ENCODE measurements at regions of chr9 and their contacts with region 1.

Region 1: GRCh38 chr9:77149879-77150278 is 27.5 kb upstream of the VPS13A start:
- DNase-seq: no peak
- H3K4me3 ChIP-seq: no peak overlapping the region
- H3K27ac ChIP-seq: no peak overlapping the region
- H3K4me1 ChIP-seq: no peaks in the 10 kb centered on the region
- H3K27me3 ChIP-seq: peaks cover 23% of the 10 kb centered on the region
- CTCF ChIP-seq: no peak
- EP300 ChIP-seq: no peak
- RAD21 ChIP-seq: no peak

Region 2: DNA sequence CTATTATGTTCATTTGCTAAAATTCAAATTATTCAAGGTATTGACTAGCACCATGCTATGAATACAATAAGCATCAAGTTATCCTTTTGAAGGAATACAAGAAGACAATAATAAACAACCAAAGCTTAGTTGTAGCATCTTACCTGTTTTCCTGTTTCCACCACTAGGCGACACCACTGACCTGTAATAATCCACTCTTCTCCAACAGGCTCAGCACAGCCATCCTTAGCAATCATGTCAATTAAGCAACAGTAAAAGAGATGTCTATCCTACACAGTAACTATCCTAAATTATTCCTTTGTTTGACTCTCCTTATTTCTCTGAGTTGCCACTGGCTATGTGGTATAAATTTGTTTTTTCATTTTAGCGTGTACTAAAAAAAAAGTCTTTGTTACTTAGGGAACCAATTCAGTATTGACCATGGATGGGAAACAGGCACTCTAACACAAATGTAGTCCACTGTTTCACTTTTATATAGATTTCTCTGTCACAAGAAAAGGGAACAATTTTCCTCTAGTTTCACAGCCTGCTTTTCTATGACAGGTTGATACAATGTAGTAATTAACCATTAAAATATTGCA is 339.4 kb before region 1 on chr9:
- CTCF ChIA-PET with region 1: interaction called, 32 read pairs
- POLR2A ChIA-PET with region 1: no interaction called
- DNase-seq: peak; percentile 37
- H3K4me3 ChIP-seq: no peak overlapping the region; a peak in 1 of 4 replicates
- H3K27ac ChIP-seq: no peak overlapping the region
- H3K4me1 ChIP-seq: no peaks in the 10 kb centered on the region
- H3K27me3 ChIP-seq: peaks cover 23% of the 10 kb centered on the region; the same call in 1 of the 2 replicates
- CTCF ChIP-seq: peak; percentile 94
- EP300 ChIP-seq: no peak
- RAD21 ChIP-seq: peak; percentile 89

Region 3: GRCh38 chr9:77125665-77126064 is 24.2 kb before region 1 on chr9:
- CTCF ChIA-PET with region 1: interaction called, 12 read pairs
- POLR2A ChIA-PET with region 1: no interaction called
- DNase-seq: no peak
- H3K4me3 ChIP-seq: no peak overlapping the region
- H3K27ac ChIP-seq: no peak overlapping the region
- H3K4me1 ChIP-seq: no peaks in the 10 kb centered on the region
- H3K27me3 ChIP-seq: peaks cover 4% of the 10 kb centered on the region; the same call in 1 of the 2 replicates
- CTCF ChIP-seq: no peak
- EP300 ChIP-seq: no peak
- RAD21 ChIP-seq: no peak

Region 4: DNA sequence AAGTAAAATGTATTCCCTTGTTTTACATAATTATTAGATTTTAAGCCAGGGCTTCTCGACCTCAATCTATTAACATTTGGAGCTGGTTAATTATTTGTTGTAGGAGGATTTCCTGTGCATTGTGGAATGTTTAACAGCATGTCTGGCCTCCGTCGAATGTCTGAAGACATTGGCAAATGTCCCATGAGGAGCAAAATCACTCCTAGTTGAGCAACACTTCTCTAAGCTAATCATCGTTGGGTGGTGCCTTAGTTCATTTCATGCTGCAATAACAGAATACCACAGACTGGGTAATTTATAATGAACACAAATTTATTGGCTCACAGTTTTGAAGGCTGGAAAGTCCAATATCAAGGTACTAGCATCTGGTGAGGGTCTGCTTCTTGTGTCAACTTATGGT is 14.0 kb after region 1 on chr9:
- CTCF ChIA-PET with region 1: interaction called, 13 read pairs
- POLR2A ChIA-PET with region 1: no interaction called
- DNase-seq: no peak
- H3K4me3 ChIP-seq: no peak overlapping the region
- H3K27ac ChIP-seq: no peak overlapping the region
- H3K4me1 ChIP-seq: no peaks in the 10 kb centered on the region; a peak in 1 of 4 replicates
- H3K27me3 ChIP-seq: no peaks in the 10 kb centered on the region
- CTCF ChIP-seq: no peak
- EP300 ChIP-seq: no peak
- RAD21 ChIP-seq: no peak

Measured in SK-N-SH (cell line).